Activated CD8-positive, alpha-beta T cell treated with anti-CD3 and anti-CD28 coated beads, Interleukin-2, amount 10 ng/mL, durations not matched to agents 7 days and 5 days (primary cell): ENCODE measurements at regions of chr7 and their contacts with region 1.

Region 1: GRCh38 chr7:139602143-139602722 is 78.7 kb downstream of the CLEC2L start:
- DNase-seq: peak; percentile 28
- ATAC-seq: peak; percentile 72
- H3K4me3 Mint-ChIP-seq: no peak overlapping the region
- H3K27ac Mint-ChIP-seq: no peak overlapping the region
- H3K4me1 Mint-ChIP-seq: no peaks in the 10 kb centered on the region
- H3K27me3 Mint-ChIP-seq: no peaks in the 10 kb centered on the region

Region 2: DNA sequence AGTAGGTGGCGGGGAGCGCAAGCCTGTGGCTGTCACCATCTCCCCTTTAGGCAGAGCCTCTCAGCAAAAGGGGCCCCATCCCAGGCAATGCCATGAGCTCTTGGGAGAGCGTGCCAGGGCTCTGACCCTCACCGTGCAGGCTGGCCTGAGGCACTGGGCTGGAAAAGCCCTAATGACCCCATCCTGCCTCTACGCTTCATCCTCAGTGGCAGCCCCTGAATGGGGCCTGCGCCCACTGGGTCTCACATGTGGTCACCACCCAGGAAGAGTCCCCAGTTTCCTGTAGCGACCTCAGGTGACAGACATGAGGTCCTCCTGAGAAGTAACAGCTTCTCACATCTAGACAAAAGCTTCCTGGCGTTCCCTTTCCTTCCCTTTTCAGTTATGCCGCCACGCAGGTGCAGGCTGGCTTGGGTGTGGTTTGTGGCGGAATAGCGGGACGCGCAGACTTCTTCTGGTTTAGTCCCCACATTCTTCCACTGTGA is 19.5 kb before region 1 on chr7:
- CTCF ChIA-PET with region 1: interaction called, 23 read pairs
- POLR2A ChIA-PET with region 1: interaction called, 4 read pairs
- DNase-seq: no peak
- ATAC-seq: peak; percentile 28
- H3K4me3 Mint-ChIP-seq: no peak overlapping the region
- H3K27ac Mint-ChIP-seq: peak overlapping the region; percentile 11
- H3K4me1 Mint-ChIP-seq: peaks cover 25% of the 10 kb centered on the region
- H3K27me3 Mint-ChIP-seq: no peaks in the 10 kb centered on the region

Region 3: DNA sequence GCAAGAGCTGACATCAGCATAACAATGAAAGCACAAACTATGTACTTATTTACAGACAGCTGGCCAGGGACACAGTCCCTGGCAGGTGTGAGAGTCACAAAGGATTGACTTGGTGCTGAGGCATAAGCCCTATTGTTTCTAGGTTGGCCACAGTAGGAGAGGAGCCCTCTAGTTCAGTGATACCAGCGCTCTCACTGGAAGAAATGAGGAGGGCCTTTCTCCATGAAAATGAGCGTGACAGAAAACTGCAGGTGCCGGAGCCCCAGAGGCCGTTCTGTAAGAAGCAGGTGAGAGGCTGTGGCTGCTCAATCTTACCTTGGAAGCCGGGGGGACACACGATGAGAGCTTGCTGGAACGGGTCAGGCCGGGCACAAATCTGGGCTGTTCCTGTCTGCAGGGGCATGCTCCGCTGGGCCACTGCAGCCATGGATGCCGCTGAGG is 11.8 kb after region 1 on chr7:
- CTCF ChIA-PET with region 1: interaction called, 34 read pairs
- POLR2A ChIA-PET with region 1: no interaction called
- DNase-seq: no peak
- ATAC-seq: no peak
- H3K4me3 Mint-ChIP-seq: no peak overlapping the region
- H3K27ac Mint-ChIP-seq: no peak overlapping the region
- H3K4me1 Mint-ChIP-seq: no peaks in the 10 kb centered on the region
- H3K27me3 Mint-ChIP-seq: no peaks in the 10 kb centered on the region

Region 4: DNA sequence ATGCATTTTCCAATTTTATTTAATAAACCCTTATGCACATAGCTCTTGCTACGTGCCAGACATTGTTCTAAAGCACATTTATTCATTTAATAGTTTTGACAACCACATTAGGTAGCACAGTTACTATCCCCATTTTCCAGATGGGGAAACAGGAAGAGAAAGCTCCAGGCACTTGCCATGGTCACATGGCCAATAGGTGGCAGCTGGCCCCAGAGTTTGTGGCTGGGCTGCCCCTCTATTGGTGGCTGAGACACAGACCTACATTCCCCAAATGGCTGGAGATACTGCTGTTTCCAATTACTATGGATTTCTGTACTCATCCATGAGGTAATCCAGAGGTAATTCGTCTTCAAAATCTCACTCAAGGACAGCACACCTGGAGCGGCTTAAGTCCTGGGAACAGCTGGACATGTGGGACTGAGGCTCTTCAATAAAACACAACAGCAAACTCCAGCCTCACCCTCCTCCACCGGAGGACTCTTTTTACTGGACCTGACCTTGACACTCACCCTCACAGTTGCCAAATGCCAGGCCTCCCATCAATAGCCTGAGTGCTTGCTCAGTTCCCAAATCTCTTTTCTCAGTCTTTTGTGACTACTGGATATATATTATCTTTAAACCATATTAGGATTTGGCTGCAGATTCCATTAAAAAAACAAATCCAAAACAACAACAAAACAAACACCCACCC is 27.3 kb after region 1 on chr7:
- CTCF ChIA-PET with region 1: interaction called, 10 read pairs
- POLR2A ChIA-PET with region 1: no interaction called
- DNase-seq: no peak
- ATAC-seq: no peak
- H3K4me3 Mint-ChIP-seq: no peak overlapping the region
- H3K27ac Mint-ChIP-seq: no peak overlapping the region
- H3K4me1 Mint-ChIP-seq: peaks cover 61% of the 10 kb centered on the region
- H3K27me3 Mint-ChIP-seq: no peaks in the 10 kb centered on the region